ENCODE measurements at regions of chr10 and their contacts with region 1.

Region 1: GRCh38 chr10:24724381-24725228 is 918 bp upstream of the ARHGAP21 start:
- DNase-seq: peak; percentile 99
- H3K4me3 ChIP-seq: peak overlapping the region; percentile 61
- H3K27ac ChIP-seq: peak overlapping the region; percentile 97
- H3K4me1 ChIP-seq: peaks cover 2% of the 10 kb centered on the region
- H3K27me3 ChIP-seq: no peaks in the 10 kb centered on the region
- CTCF ChIP-seq: no peak

Region 2: DNA sequence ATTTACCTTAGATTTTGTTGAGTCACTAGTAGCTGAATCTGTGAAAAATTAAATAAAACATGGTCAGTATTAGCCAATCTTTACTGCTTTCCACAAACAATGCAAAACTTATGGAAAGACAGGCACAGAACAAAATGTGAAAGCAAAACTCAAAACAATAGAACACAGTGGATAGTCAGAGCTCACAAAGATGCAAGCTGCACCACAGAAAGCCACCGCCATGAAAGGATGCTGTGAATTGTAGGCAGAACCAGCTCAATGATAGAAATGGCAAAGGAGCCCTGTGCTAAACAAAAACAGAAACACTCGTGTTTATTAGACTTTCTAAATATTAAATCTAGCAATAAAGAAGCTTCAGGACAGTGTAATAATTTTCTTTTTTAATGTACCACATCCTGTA is 135.3 kb before region 1 on chr10:
- intact Hi-C with region 1: no loop called
- DNase-seq: no peak
- H3K4me3 ChIP-seq: no peak overlapping the region
- H3K27ac ChIP-seq: no peak overlapping the region
- H3K4me1 ChIP-seq: no peaks in the 10 kb centered on the region
- H3K27me3 ChIP-seq: no peaks in the 10 kb centered on the region
- CTCF ChIP-seq: no peak

Region 3: GRCh38 chr10:24642622-24643417 is 81.8 kb before region 1 on chr10:
- intact Hi-C with region 1: loop called (anchors 5 kb)
- DNase-seq: peak; percentile 37
- H3K4me3 ChIP-seq: no peak overlapping the region
- H3K27ac ChIP-seq: peak overlapping the region; percentile 19
- H3K4me1 ChIP-seq: peaks cover 7% of the 10 kb centered on the region
- H3K27me3 ChIP-seq: no peaks in the 10 kb centered on the region
- CTCF ChIP-seq: peak; percentile 77

Region 4: GRCh38 chr10:24851629-24852028 is 127.0 kb after region 1 on chr10:
- intact Hi-C with region 1: no loop called
- DNase-seq: peak; percentile 63
- H3K4me3 ChIP-seq: no peak overlapping the region
- H3K27ac ChIP-seq: no peak overlapping the region
- H3K4me1 ChIP-seq: no peaks in the 10 kb centered on the region
- H3K27me3 ChIP-seq: no peaks in the 10 kb centered on the region
- CTCF ChIP-seq: no peak

Measured in colonic mucosa (tissue), 4 donors.